ENCODE measurements at regions of chr1 and their contacts with region 1.

Region 1: GRCh38 chr1:75785983-75786853 is at the start of gene RABGGTB:
- DNase-seq: peak; percentile 93
- H3K4me3 Mint-ChIP-seq: peak within 1 kb of the TSS; percentile 97
- H3K27ac Mint-ChIP-seq: peak within 1 kb of the TSS; percentile 99
- H3K4me1 Mint-ChIP-seq: peaks cover 46% of the 10 kb centered on the region
- H3K27me3 Mint-ChIP-seq: peaks cover 1% of the 10 kb centered on the region
- total RNA-seq, gene RABGGTB: 233 and 240 TPM in 2 replicates

Region 2: DNA sequence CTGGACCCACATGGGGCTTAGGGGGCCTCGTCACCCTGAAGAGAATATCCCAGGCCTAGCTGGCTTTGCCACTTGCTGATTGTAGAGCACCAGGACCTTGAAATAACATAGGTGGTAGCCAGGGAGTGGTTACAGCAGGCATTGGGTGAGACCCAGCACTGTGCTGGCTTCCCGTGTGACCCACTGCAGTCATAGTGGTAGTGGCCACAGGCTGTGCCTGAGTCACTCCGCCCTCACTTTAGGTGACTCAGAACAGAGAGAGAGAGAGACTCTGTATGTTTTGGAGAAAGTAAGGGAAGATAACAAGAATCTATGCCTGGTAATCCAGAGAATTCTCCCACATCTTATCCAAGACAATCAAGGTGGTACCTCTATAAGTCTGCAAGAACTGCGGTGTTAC is 750.7 kb before region 1 on chr1:
- intact Hi-C with region 1: no loop called
- DNase-seq: no peak
- H3K4me3 Mint-ChIP-seq: no peak overlapping the region
- H3K27ac Mint-ChIP-seq: no peak overlapping the region
- H3K4me1 Mint-ChIP-seq: no peaks in the 10 kb centered on the region
- H3K27me3 Mint-ChIP-seq: no peaks in the 10 kb centered on the region

Region 3: GRCh38 chr1:76012341-76013208 is 226.4 kb after region 1 on chr1:
- intact Hi-C with region 1: no loop called
- DNase-seq: no peak
- H3K4me3 Mint-ChIP-seq: no peak overlapping the region
- H3K27ac Mint-ChIP-seq: no peak overlapping the region
- H3K4me1 Mint-ChIP-seq: no peaks in the 10 kb centered on the region
- H3K27me3 Mint-ChIP-seq: peaks cover 3% of the 10 kb centered on the region

Region 4: GRCh38 chr1:76074321-76075187 is 288.3 kb after region 1 on chr1 and contains the start of gene ST6GALNAC3:
- intact Hi-C with region 1: loop called (anchors 1 kb)
- DNase-seq: peak; percentile 71
- H3K4me3 Mint-ChIP-seq: peak within 1 kb of the TSS; percentile 84
- H3K27ac Mint-ChIP-seq: peak within 1 kb of the TSS; percentile 49
- H3K4me1 Mint-ChIP-seq: peaks cover 10% of the 10 kb centered on the region
- H3K27me3 Mint-ChIP-seq: peaks cover 25% of the 10 kb centered on the region
- total RNA-seq, gene ST6GALNAC3: not detected in 2 replicates

Measured in activated T-helper 1 cell treated with anti-CD3 and anti-CD28 coated beads, Interleukin-12 subunit alpha, Interleukin-12 subunit beta, Interleukin-2, Interleukin-4 antibody, amounts not matched to agents 30 ng/mL and 10 ng/mL and 1 ng/mL, durations not matched to agents 14 hours and 24 hours and 36 hours (primary cell).